ENCODE measurements at regions of chr2 and their contacts with region 1.

Region 1: DNA sequence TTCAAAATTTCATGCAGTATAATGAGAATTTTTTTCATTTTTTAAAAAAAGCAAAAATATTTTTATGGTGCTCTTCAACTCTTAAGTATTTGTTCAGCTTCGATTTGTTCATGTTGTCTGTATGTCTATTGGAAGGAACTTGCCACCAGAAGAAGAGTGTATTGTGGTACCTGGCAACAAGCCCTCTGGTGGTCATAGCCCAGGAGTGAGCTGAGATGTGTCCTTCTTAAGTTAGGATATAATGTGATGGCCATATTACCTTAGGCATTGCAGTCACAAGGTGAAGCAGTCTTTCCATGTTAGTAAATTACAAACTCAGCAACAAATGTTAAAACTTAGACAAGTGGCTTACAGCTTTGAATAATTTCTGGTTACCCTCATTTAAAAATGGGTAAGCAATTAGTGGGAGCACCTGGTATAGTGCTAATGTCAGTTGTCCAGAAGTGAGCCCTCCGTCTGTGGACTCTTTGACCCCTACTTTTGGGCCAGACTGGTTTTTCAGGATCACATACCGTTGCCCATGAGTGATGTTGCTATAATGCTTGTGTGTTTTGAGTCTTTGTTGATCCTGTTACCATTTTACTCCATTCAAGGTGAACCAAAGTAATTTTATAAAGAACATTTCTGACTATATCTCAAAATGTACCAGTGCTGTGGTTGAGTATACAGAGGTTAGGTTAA is 57.4 kb downstream of the MYO1B start:
- DNase-seq: peak in 6 of 9 donors; percentile 4 to 27 (median 18)
- ATAC-seq: peak; percentile 54
- H3K4me3 ChIP-seq: no peak overlapping the region
- H3K4me3 Mint-ChIP-seq: no peak overlapping the region
- H3K27ac ChIP-seq: no peak overlapping the region
- H3K27ac Mint-ChIP-seq: peak overlapping the region in 1 of 9 donors; percentile 16
- H3K4me1 ChIP-seq: no peaks in the 10 kb centered on the region
- H3K4me1 Mint-ChIP-seq: no peaks in the 10 kb centered on the region
- H3K27me3 ChIP-seq: no peaks in the 10 kb centered on the region
- H3K27me3 Mint-ChIP-seq: no peaks in the 10 kb centered on the region

Region 2: GRCh38 chr2:191158193-191158592 is 144.4 kb before region 1 on chr2:
- CTCF ChIA-PET with region 1: no interaction called
- POLR2A ChIA-PET with region 1: no interaction called
- intact Hi-C with region 1: no loop called
- DNase-seq: no peak
- ATAC-seq: no peak
- H3K4me3 ChIP-seq: no peak overlapping the region
- H3K4me3 Mint-ChIP-seq: no peak overlapping the region
- H3K27ac ChIP-seq: no peak overlapping the region
- H3K27ac Mint-ChIP-seq: peak overlapping the region in 1 of 9 donors; percentile 29
- H3K4me1 ChIP-seq: peaks cover 4 to 13% of the 10 kb centered on the region in 2 donors
- H3K4me1 Mint-ChIP-seq: peaks cover 0 to 36% (median 5%) of the 10 kb centered on the region in 7 donors
- H3K27me3 ChIP-seq: no peaks in the 10 kb centered on the region
- H3K27me3 Mint-ChIP-seq: peaks cover 0 to 7% (median 0%) of the 10 kb centered on the region in 5 donors

Region 3: GRCh38 chr2:191404554-191404991 is 102.0 kb after region 1 on chr2:
- CTCF ChIA-PET with region 1: no interaction called
- POLR2A ChIA-PET with region 1: no interaction called
- intact Hi-C with region 1: no loop called
- DNase-seq: no peak
- ATAC-seq: no peak
- H3K4me3 ChIP-seq: no peak overlapping the region
- H3K4me3 Mint-ChIP-seq: no peak overlapping the region
- H3K27ac ChIP-seq: no peak overlapping the region
- H3K27ac Mint-ChIP-seq: no peak overlapping the region
- H3K4me1 ChIP-seq: no peaks in the 10 kb centered on the region
- H3K4me1 Mint-ChIP-seq: peaks cover 0 to 12% (median 0%) of the 10 kb centered on the region in 7 donors
- H3K27me3 ChIP-seq: no peaks in the 10 kb centered on the region
- H3K27me3 Mint-ChIP-seq: no peaks in the 10 kb centered on the region

Region 4: GRCh38 chr2:191521608-191522208 is 219.1 kb after region 1 on chr2:
- CTCF ChIA-PET with region 1: no interaction called
- POLR2A ChIA-PET with region 1: no interaction called
- intact Hi-C with region 1: loop called in 1 of 2 experiments (anchors 2 kb)
- DNase-seq: peak in 5 of 9 donors; percentile 16 to 51 (median 33)
- ATAC-seq: no peak
- H3K4me3 ChIP-seq: no peak overlapping the region
- H3K4me3 Mint-ChIP-seq: no peak overlapping the region
- H3K27ac ChIP-seq: no peak overlapping the region
- H3K27ac Mint-ChIP-seq: no peak overlapping the region
- H3K4me1 ChIP-seq: no peaks in the 10 kb centered on the region
- H3K4me1 Mint-ChIP-seq: no peaks in the 10 kb centered on the region
- H3K27me3 ChIP-seq: no peaks in the 10 kb centered on the region
- H3K27me3 Mint-ChIP-seq: peaks cover 0 to 28% (median 7%) of the 10 kb centered on the region in 5 donors